ENCODE measurements at regions of chr7 and their contacts with region 1.

Region 1: GRCh38 chr7:66099616-66100474 is 14.8 kb upstream of the CRCP start:
- DNase-seq: peak; percentile 25 to 88
- H3K4me3 ChIP-seq: peak overlapping the region; percentile 47 to 60
- H3K27ac ChIP-seq: peak overlapping the region; percentile 84 to 93
- H3K4me1 ChIP-seq: no peaks in the 10 kb centered on the region
- H3K27me3 ChIP-seq: no peaks in the 10 kb centered on the region
- CTCF ChIP-seq: no peak

Region 2: GRCh38 chr7:66075590-66076461 is 24.0 kb before region 1 on chr7 and contains the start of gene ASL:
- intact Hi-C with region 1: loop called (anchors 2 kb)
- DNase-seq: peak; percentile 73 to 96
- H3K4me3 ChIP-seq: peak within 1 kb of the TSS; percentile 92 to 94
- H3K27ac ChIP-seq: peak within 1 kb of the TSS; percentile 72 to 75
- H3K4me1 ChIP-seq: peaks cover 8 to 18% of the 10 kb centered on the region in 2 donors
- H3K27me3 ChIP-seq: no peaks in the 10 kb centered on the region
- CTCF ChIP-seq: no peak
- total RNA-seq, gene ASL: 46.2 TPM

Region 3: DNA sequence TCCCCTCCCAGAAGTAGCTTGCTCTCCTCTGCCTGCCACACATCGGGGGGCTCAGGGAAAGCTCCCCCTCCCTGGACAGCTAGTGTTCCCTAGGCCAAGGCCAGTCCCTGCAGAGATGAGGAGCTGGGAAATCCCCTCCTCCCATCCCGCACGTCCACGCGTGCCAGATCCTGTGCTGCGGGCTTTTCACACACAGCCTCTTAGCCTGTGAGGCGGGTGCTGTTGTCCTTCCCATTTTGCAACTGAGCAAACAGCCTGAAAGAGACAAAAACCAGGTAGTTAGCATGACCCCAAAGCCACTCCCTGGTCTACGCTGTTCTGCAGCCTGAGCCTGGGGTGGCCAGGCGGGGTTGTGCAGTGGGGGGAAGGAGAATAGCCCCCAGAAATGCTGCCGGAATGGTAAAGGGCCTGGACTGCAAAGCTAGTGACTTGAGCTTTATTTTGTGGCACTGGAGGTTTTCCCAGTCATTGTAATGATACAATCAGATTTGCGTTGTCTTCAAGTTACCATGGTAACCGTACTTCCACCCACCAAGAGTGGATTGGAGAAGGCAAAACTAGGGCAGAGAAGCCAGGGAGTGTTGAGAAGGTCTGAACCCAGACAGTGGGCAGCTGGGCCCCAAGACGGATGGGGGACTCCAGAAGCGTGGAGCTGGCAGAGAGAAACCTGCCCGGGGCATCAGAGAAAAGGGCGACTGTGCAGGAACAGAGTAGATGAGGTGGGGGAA is 430.2 kb after region 1 on chr7:
- intact Hi-C with region 1: no loop called
- DNase-seq: no peak
- H3K4me3 ChIP-seq: no peak overlapping the region
- H3K27ac ChIP-seq: no peak overlapping the region
- H3K4me1 ChIP-seq: no peaks in the 10 kb centered on the region
- H3K27me3 ChIP-seq: no peaks in the 10 kb centered on the region
- CTCF ChIP-seq: no peak